ENCODE measurements at regions of chr4 and their contacts with region 1.

Region 1: GRCh38 chr4:22500831-22501719 is 14.8 kb downstream of the ADGRA3 start:
- DNase-seq: peak; percentile 28
- ATAC-seq: peak; percentile 77
- H3K4me3 ChIP-seq: no peak overlapping the region
- H3K27ac ChIP-seq: no peak overlapping the region
- H3K4me1 ChIP-seq: no peaks in the 10 kb centered on the region
- H3K27me3 ChIP-seq: no peaks in the 10 kb centered on the region
- CTCF ChIP-seq: no peak
- EP300 ChIP-seq: peak in 1 of 2 experiments; percentile 70; a peak in 1 of 4 replicates
- POLR2A ChIP-seq: no peak
- RAD21 ChIP-seq: no peak

Region 2: DNA sequence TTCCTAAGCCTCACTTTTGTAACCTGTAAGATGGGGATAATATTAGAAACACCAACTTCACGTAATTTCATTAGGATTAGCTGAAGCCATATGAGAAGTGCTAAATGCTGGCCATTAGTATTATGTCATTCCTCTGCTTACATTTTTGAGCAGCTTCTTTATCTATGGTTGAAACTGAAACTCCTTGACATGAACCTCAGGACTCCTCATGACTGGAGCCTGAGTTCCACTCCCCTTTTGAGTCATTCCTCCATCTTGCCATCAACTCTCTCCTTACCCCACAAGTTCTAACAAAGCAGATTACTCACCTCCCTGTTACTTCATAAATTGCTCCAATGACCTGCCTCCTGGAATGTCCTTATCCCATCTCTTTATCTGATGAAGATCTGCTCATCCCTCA is 429.3 kb before region 1 on chr4:
- CTCF ChIA-PET with region 1: no interaction called
- POLR2A ChIA-PET with region 1: no interaction called
- RAD21 ChIA-PET with region 1: no interaction called
- SMC1A ChIA-PET with region 1: no interaction called
- in situ Hi-C with region 1: no loop called
- intact Hi-C with region 1: no loop called
- DNase-seq: no peak
- ATAC-seq: peak; percentile 77
- H3K4me3 ChIP-seq: no peak overlapping the region
- H3K27ac ChIP-seq: no peak overlapping the region
- H3K4me1 ChIP-seq: no peaks in the 10 kb centered on the region
- H3K27me3 ChIP-seq: no peaks in the 10 kb centered on the region
- CTCF ChIP-seq: no peak
- EP300 ChIP-seq: no peak
- POLR2A ChIP-seq: no peak
- RAD21 ChIP-seq: no peak

Region 3: GRCh38 chr4:22202246-22202974 is 298.7 kb before region 1 on chr4:
- CTCF ChIA-PET with region 1: no interaction called
- POLR2A ChIA-PET with region 1: no interaction called
- RAD21 ChIA-PET with region 1: no interaction called
- SMC1A ChIA-PET with region 1: no interaction called
- in situ Hi-C with region 1: no loop called
- intact Hi-C with region 1: no loop called
- DNase-seq: no peak
- ATAC-seq: no peak
- H3K4me3 ChIP-seq: no peak overlapping the region
- H3K27ac ChIP-seq: no peak overlapping the region
- H3K4me1 ChIP-seq: no peaks in the 10 kb centered on the region
- H3K27me3 ChIP-seq: no peaks in the 10 kb centered on the region
- CTCF ChIP-seq: no peak
- EP300 ChIP-seq: no peak
- POLR2A ChIP-seq: no peak
- RAD21 ChIP-seq: no peak

Region 4: GRCh38 chr4:22454955-22455354 is 46.1 kb before region 1 on chr4:
- CTCF ChIA-PET with region 1: interaction called, 4 read pairs
- POLR2A ChIA-PET with region 1: interaction called, 4 read pairs
- RAD21 ChIA-PET with region 1: interaction called, 4 read pairs
- SMC1A ChIA-PET with region 1: interaction called, 12 read pairs
- in situ Hi-C with region 1: no loop called
- intact Hi-C with region 1: no loop called
- DNase-seq: no peak
- ATAC-seq: peak; percentile 85
- H3K4me3 ChIP-seq: no peak overlapping the region
- H3K27ac ChIP-seq: no peak overlapping the region
- H3K4me1 ChIP-seq: no peaks in the 10 kb centered on the region
- H3K27me3 ChIP-seq: no peaks in the 10 kb centered on the region
- CTCF ChIP-seq: no peak
- EP300 ChIP-seq: no peak; a peak in 1 of 4 replicates
- POLR2A ChIP-seq: no peak
- RAD21 ChIP-seq: no peak

Region 5: DNA sequence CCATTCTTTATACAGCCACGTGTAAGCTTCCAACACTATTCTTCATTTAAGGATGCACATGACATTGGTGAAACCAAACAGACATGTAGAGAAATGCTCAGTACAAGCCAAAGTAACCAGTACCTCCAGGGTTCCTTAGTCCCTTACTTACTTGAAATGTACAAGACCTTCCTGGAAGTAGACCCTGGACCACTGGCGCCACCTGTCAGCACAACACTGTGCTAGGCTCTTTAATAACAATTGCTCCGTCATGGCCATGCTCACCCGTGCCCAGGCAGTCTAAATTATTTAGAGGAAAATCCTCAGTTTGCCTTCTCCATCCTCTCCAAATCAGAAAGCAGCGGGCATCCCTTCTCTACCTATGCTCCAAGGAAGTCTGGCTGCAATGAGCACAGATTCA is 37.9 kb before region 1 on chr4:
- CTCF ChIA-PET with region 1: interaction called, 15 read pairs
- POLR2A ChIA-PET with region 1: interaction called, 3 read pairs
- RAD21 ChIA-PET with region 1: interaction called, 4 read pairs
- SMC1A ChIA-PET with region 1: interaction called, 15 read pairs
- in situ Hi-C with region 1: no loop called
- intact Hi-C with region 1: no loop called
- DNase-seq: no peak
- ATAC-seq: peak; percentile 65
- H3K4me3 ChIP-seq: no peak overlapping the region
- H3K27ac ChIP-seq: no peak overlapping the region
- H3K4me1 ChIP-seq: no peaks in the 10 kb centered on the region
- H3K27me3 ChIP-seq: no peaks in the 10 kb centered on the region
- CTCF ChIP-seq: no peak
- EP300 ChIP-seq: no peak
- POLR2A ChIP-seq: no peak
- RAD21 ChIP-seq: no peak

Region 6: DNA sequence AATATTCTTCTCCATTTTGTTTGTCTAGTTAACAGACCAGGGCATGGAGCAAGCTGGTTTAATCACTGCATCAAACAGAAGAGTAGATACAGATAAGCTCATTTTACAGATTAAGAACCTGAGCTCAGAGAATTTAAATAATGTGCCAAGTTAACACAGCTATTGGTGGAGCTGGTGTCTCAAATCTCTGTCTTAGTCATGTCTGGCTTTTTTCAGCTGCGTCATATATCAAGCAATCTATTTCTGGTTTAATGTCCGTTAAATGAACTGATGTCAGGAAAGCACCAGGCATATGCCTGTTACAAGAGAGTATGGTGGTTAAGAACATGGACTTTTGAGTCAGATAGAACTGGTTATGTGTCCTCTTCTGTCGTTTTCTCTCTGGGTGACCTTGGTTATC is 94.6 kb after region 1 on chr4:
- CTCF ChIA-PET with region 1: interaction called, 4 read pairs
- POLR2A ChIA-PET with region 1: interaction called, 11 read pairs
- RAD21 ChIA-PET with region 1: interaction called, 19 read pairs
- SMC1A ChIA-PET with region 1: interaction called, 21 read pairs
- in situ Hi-C with region 1: no loop called
- intact Hi-C with region 1: loop called (anchors 5 kb)
- DNase-seq: peak; percentile 17
- ATAC-seq: peak; percentile 84
- H3K4me3 ChIP-seq: no peak overlapping the region
- H3K27ac ChIP-seq: no peak overlapping the region
- H3K4me1 ChIP-seq: no peaks in the 10 kb centered on the region
- H3K27me3 ChIP-seq: no peaks in the 10 kb centered on the region
- CTCF ChIP-seq: no peak
- EP300 ChIP-seq: peak; percentile 58 to 75; a peak in 2 of 4 replicates
- POLR2A ChIP-seq: no peak
- RAD21 ChIP-seq: no peak

Region 7: DNA sequence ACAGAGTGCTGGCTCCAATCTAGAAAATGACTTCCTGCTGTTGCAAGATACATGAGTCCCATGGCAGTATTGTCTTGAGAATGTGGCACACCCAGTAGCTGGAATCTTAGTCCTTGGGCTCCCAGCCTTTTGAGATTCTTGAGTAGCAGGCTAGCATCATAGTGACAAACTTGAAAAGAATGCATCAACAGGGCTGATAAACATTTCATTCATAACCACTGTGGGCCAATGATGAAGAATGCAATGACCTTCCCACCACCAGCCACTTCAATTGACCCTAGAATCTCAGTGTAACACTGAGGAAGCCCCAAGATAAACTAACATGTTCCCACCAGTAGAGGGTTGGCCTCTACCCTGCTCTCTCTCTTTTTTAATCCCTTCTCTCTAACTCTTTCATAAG is 521.0 kb after region 1 on chr4:
- CTCF ChIA-PET with region 1: no interaction called
- POLR2A ChIA-PET with region 1: no interaction called
- RAD21 ChIA-PET with region 1: no interaction called
- SMC1A ChIA-PET with region 1: no interaction called
- in situ Hi-C with region 1: no loop called
- intact Hi-C with region 1: no loop called
- DNase-seq: no peak
- ATAC-seq: no peak; the same call in 2 of the 3 replicates
- H3K4me3 ChIP-seq: no peak overlapping the region
- H3K27ac ChIP-seq: no peak overlapping the region
- H3K4me1 ChIP-seq: no peaks in the 10 kb centered on the region
- H3K27me3 ChIP-seq: no peaks in the 10 kb centered on the region
- CTCF ChIP-seq: no peak
- EP300 ChIP-seq: no peak
- POLR2A ChIP-seq: no peak
- RAD21 ChIP-seq: no peak

Measured in GM12878 (cell line).